ENCODE measurements at regions of chr3 and their contacts with region 1.

Region 1: GRCh38 chr3:12984023-12984823 is 89.0 kb downstream of the IQSEC1 start:
- DNase-seq: peak in 5 of 6 donors; percentile 60 to 78 (median 67)
- ATAC-seq: peak; percentile 85 to 91 (median 88)
- H3K4me3 ChIP-seq: no peak overlapping the region
- H3K27ac ChIP-seq: no peak overlapping the region
- H3K4me1 ChIP-seq: peaks cover 4 to 5% (median 4%) of the 10 kb centered on the region in 3 donors
- H3K27me3 ChIP-seq: no peaks in the 10 kb centered on the region
- CTCF ChIP-seq: peak; percentile 61 to 72 (median 68)

Region 2: GRCh38 chr3:12875857-12876836 is 108.1 kb before region 1 on chr3:
- intact Hi-C with region 1: loop called in 1 of 3 experiments (anchors 10 kb)
- DNase-seq: peak in 5 of 6 donors; percentile 38 to 75 (median 55)
- ATAC-seq: peak; percentile 78 to 95 (median 90)
- H3K4me3 ChIP-seq: peak overlapping the region in 2 of 4 donors; percentile 5 to 38
- H3K27ac ChIP-seq: no peak overlapping the region
- H3K4me1 ChIP-seq: peaks cover 0 to 7% (median 0%) of the 10 kb centered on the region in 3 donors
- H3K27me3 ChIP-seq: no peaks in the 10 kb centered on the region
- CTCF ChIP-seq: no peak

Region 3: GRCh38 chr3:13106308-13107001 is 122.2 kb after region 1 on chr3:
- intact Hi-C with region 1: no loop called
- DNase-seq: peak in 1 of 6 donors; percentile 9
- ATAC-seq: no peak
- H3K4me3 ChIP-seq: no peak overlapping the region
- H3K27ac ChIP-seq: no peak overlapping the region
- H3K4me1 ChIP-seq: peaks cover 4 to 7% (median 7%) of the 10 kb centered on the region in 3 donors
- H3K27me3 ChIP-seq: no peaks in the 10 kb centered on the region
- CTCF ChIP-seq: no peak

Measured in pancreas (tissue), 10 donors.